ENCODE measurements at regions of chr7 and their contacts with region 1.

Region 1: GRCh38 chr7:93117852-93118530 is at the start of gene SAMD9:
- DNase-seq: peak; percentile 31 to 88
- ATAC-seq: peak; percentile 99 to 100 (median 99)
- H3K4me3 ChIP-seq: peak within 1 kb of the TSS; percentile 56
- H3K4me3 Mint-ChIP-seq: peak within 1 kb of the TSS; percentile 98
- H3K27ac ChIP-seq: peak within 1 kb of the TSS; percentile 86
- H3K27ac Mint-ChIP-seq: peak within 1 kb of the TSS; percentile 90 to 92
- H3K4me1 ChIP-seq: peaks cover 12% of the 10 kb centered on the region
- H3K4me1 Mint-ChIP-seq: peaks cover 50% of the 10 kb centered on the region in 2 donors
- H3K27me3 ChIP-seq: no peaks in the 10 kb centered on the region
- H3K27me3 Mint-ChIP-seq: no peaks in the 10 kb centered on the region
- CTCF ChIP-seq: no peak
- total RNA-seq, gene SAMD9: 52.3 to 70.0 (median 56.9) TPM

Region 2: DNA sequence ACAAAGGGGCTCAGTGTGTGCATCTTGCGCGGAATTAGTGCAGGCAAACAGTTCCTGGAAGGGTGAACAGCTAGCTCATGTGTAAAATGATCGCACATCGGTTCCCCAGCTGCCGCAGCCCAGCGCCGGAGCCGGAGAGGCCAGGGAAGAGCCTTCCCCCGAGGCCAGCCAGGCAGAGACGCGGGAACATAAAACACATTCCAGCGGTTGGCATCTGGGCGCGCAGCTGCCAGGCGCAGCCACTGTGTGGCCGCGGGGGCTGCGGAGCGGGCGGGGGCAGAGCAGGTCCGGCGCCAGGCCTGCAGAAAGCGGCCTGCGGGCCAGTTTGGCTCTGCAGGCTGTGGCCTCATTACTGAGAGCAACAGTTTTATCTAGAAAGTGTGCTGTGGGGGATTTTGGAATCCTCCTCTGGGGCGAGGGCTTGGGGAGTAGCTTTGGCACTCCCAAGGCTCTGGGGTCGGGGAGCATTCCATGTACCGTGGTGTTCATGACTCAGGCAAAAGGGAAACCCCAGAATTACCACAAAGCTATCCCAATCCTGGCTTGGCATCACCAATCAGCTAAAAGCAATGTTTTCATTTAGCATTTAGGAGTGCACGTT is 74.5 kb before region 1 on chr7:
- intact Hi-C with region 1: no loop called
- DNase-seq: no peak
- ATAC-seq: no peak
- H3K4me3 ChIP-seq: no peak overlapping the region
- H3K4me3 Mint-ChIP-seq: no peak overlapping the region
- H3K27ac ChIP-seq: no peak overlapping the region
- H3K27ac Mint-ChIP-seq: no peak overlapping the region
- H3K4me1 ChIP-seq: no peaks in the 10 kb centered on the region
- H3K4me1 Mint-ChIP-seq: no peaks in the 10 kb centered on the region
- H3K27me3 ChIP-seq: peaks cover 3% of the 10 kb centered on the region
- H3K27me3 Mint-ChIP-seq: peaks cover 4 to 14% of the 10 kb centered on the region in 2 donors
- CTCF ChIP-seq: no peak

Region 3: DNA sequence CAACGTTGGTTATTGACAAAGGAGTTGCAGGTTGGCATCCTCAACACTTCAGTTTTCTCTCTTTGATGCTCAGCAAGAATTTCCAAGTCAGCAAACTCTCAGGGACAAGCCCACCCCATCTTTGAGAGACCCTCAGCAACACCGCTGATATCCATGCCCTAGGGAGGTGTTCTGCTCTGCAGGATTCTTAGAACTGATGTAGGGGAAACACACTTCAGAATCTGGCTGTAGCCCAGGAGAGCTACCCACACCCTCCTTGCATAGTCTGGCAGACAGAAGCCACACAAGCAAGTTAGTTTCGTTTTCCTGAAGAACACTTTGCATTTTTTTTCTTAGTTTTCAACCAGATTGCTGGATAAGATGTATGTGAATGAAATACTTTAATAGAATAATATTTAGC is 29.4 kb after region 1 on chr7:
- intact Hi-C with region 1: loop called (anchors 1 kb)
- DNase-seq: peak; percentile 25 to 68
- ATAC-seq: peak; percentile 81 to 87 (median 86)
- H3K4me3 ChIP-seq: peak overlapping the region; percentile 75
- H3K4me3 Mint-ChIP-seq: peak overlapping the region; percentile 97
- H3K27ac ChIP-seq: peak overlapping the region; percentile 59
- H3K27ac Mint-ChIP-seq: peak overlapping the region; percentile 94 to 99
- H3K4me1 ChIP-seq: peaks cover 10% of the 10 kb centered on the region
- H3K4me1 Mint-ChIP-seq: peaks cover 40 to 42% of the 10 kb centered on the region in 2 donors
- H3K27me3 ChIP-seq: no peaks in the 10 kb centered on the region
- H3K27me3 Mint-ChIP-seq: no peaks in the 10 kb centered on the region
- CTCF ChIP-seq: no peak